WTC11 (cell line): ENCODE measurements at regions of chr11 and their contacts with region 1.

Region 1: GRCh38 chr11:70511340-70511739 is 113.0 kb downstream of the CTTN start:
- DNase-seq: peak; percentile 62
- ATAC-seq: peak; percentile 80
- H3K4me3 Mint-ChIP-seq: no peak overlapping the region
- H3K27ac Mint-ChIP-seq: no peak overlapping the region
- H3K4me1 Mint-ChIP-seq: peaks cover 17% of the 10 kb centered on the region
- H3K27me3 Mint-ChIP-seq: no peaks in the 10 kb centered on the region; the same call in none of the 2 replicates
- CTCF ChIP-seq: peak; percentile 56; the same call in 1 of the 2 replicates

Region 2: DNA sequence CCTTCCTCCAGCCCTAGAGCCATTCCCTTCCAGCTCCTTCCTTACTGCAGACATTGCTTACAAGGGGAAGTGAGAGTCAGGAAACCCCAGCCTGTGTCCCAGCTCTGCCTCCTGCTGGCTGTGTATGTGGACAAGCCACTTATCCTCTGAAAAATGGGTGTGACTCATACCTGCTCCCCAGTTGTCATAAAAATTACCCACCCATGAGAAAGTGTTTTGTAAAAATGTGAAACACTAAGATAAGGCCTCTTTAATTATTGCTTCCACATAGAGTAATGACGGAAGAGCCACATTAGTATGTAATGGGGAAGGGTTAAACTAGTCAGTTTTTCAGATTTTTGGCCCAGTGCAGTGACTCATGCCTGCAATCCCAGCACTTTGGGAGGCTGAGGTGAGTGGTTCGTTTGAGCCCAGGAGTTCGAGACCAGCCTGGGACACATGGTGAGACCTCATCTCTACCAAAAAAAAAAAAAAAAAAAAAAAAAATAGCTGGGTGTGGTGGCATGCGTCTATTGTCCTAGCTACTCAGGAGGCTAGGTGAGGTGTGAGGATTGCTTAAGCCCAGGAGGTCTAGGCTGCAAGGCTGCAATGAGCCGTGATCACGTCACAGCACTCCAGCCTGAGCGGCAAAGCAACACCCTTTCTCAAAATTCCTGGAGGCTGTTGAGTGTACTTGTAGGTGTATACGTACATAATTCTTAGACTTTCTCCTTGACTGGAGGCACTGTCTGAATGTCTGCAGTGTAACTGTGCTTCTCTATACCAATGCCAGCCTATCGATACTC is 28.1 kb before region 1 on chr11:
- CTCF ChIA-PET with region 1: interaction called, 18 read pairs
- POLR2A ChIA-PET with region 1: no interaction called
- DNase-seq: no peak
- ATAC-seq: peak; percentile 57
- H3K4me3 Mint-ChIP-seq: no peak overlapping the region
- H3K27ac Mint-ChIP-seq: no peak overlapping the region
- H3K4me1 Mint-ChIP-seq: no peaks in the 10 kb centered on the region
- H3K27me3 Mint-ChIP-seq: no peaks in the 10 kb centered on the region
- CTCF ChIP-seq: no peak

Region 3: GRCh38 chr11:70522593-70523311 is 11.4 kb after region 1 on chr11:
- CTCF ChIA-PET with region 1: interaction called, 32 read pairs
- POLR2A ChIA-PET with region 1: interaction called, 3 read pairs
- DNase-seq: no peak
- ATAC-seq: peak; percentile 17
- H3K4me3 Mint-ChIP-seq: no peak overlapping the region
- H3K27ac Mint-ChIP-seq: no peak overlapping the region; the same call in 1 of the 2 replicates
- H3K4me1 Mint-ChIP-seq: peaks cover 74% of the 10 kb centered on the region
- H3K27me3 Mint-ChIP-seq: no peaks in the 10 kb centered on the region
- CTCF ChIP-seq: no peak

Region 4: DNA sequence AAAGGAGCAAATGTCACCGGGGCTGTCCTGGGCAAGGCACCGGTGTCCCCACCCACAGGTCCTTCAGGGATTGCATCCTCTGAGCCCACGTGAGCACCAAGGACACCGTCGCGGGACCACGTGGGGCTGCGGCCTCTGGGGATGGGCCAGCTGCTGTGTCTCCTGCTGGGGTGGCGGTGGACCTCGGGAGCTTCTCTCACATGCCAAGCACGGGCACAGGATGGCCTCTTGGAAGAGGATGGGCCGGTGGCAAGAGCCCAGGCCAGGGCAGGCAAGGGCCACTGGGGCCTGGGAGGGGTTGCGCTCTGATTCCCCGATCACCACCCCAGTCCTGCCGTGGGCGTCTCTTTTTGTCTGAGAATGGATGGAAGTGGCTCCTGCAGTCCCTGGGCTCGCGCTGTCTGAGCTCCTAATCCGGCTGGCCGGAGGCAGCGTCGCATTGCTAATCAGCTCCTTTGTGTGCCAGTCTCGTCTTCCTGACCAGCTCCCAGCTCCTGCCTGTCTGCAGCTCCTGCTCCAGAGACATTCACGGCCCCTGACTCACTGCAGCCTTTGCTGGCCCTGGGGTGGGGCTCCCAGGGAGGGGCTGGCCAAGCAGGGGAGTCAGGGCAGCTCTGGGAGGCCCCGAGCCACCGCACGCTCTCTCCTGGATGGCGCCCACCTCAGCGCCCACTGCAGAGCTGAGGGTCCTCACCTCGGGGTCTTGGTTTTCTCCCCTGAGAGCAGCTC is 33.6 kb after region 1 on chr11:
- CTCF ChIA-PET with region 1: interaction called, 30 read pairs
- POLR2A ChIA-PET with region 1: no interaction called
- DNase-seq: peak; percentile 52
- ATAC-seq: peak; percentile 76
- H3K4me3 Mint-ChIP-seq: no peak overlapping the region
- H3K27ac Mint-ChIP-seq: peak overlapping the region; percentile 76; the same call in 1 of the 2 replicates
- H3K4me1 Mint-ChIP-seq: peaks cover 36% of the 10 kb centered on the region
- H3K27me3 Mint-ChIP-seq: no peaks in the 10 kb centered on the region
- CTCF ChIP-seq: no peak

Region 5: GRCh38 chr11:70551351-70552166 is 40.2 kb after region 1 on chr11:
- CTCF ChIA-PET with region 1: interaction called, 30 read pairs
- POLR2A ChIA-PET with region 1: no interaction called
- DNase-seq: no peak
- ATAC-seq: no peak; the same call in 1 of the 2 replicates
- H3K4me3 Mint-ChIP-seq: no peak overlapping the region
- H3K27ac Mint-ChIP-seq: peak overlapping the region; percentile 74; the same call in 1 of the 2 replicates
- H3K4me1 Mint-ChIP-seq: peaks cover 37% of the 10 kb centered on the region
- H3K27me3 Mint-ChIP-seq: no peaks in the 10 kb centered on the region
- CTCF ChIP-seq: no peak

Region 6: GRCh38 chr11:70568038-70568813 is 56.9 kb after region 1 on chr11:
- CTCF ChIA-PET with region 1: interaction called, 14 read pairs
- POLR2A ChIA-PET with region 1: no interaction called
- DNase-seq: peak; percentile 67
- ATAC-seq: peak; percentile 82
- H3K4me3 Mint-ChIP-seq: peak overlapping the region; percentile 18; the same call in 1 of the 2 replicates
- H3K27ac Mint-ChIP-seq: peak overlapping the region; percentile 91
- H3K4me1 Mint-ChIP-seq: peaks cover 21% of the 10 kb centered on the region
- H3K27me3 Mint-ChIP-seq: no peaks in the 10 kb centered on the region
- CTCF ChIP-seq: no peak

Region 7: DNA sequence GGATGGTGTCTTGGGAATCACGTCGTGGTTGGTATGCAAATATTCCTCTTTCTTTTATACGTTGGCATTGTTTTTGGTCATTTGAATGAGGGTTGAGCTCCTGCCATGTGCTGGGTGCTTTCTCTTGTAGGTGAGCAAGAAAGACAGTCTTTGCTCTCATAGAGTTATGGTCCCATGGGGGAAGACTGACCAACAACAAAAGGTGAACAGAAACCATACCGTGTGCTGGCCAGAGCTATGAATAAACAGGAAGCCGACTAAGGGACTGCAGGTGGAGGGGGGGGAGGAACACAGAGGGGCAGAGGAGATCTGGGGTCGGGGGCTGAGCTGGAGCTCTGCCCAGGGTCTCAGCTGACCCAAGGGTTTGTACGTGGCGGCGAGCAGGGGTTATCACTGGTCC is 132.3 kb after region 1 on chr11:
- CTCF ChIA-PET with region 1: interaction called, 16 read pairs
- POLR2A ChIA-PET with region 1: no interaction called
- DNase-seq: no peak
- ATAC-seq: no peak
- H3K4me3 Mint-ChIP-seq: peak overlapping the region; percentile 18
- H3K27ac Mint-ChIP-seq: peak overlapping the region; percentile 98
- H3K4me1 Mint-ChIP-seq: peaks cover 83% of the 10 kb centered on the region
- H3K27me3 Mint-ChIP-seq: no peaks in the 10 kb centered on the region
- CTCF ChIP-seq: no peak

Region 8: GRCh38 chr11:71188886-71189767 is 677.8 kb after region 1 on chr11:
- CTCF ChIA-PET with region 1: no interaction called
- POLR2A ChIA-PET with region 1: no interaction called
- DNase-seq: no peak
- ATAC-seq: peak; percentile 22; the same call in 1 of the 2 replicates
- H3K4me3 Mint-ChIP-seq: no peak overlapping the region
- H3K27ac Mint-ChIP-seq: no peak overlapping the region
- H3K4me1 Mint-ChIP-seq: peaks cover 8% of the 10 kb centered on the region
- H3K27me3 Mint-ChIP-seq: no peaks in the 10 kb centered on the region
- CTCF ChIP-seq: no peak